ENCODE measurements at regions of chr12 and their contacts with region 1.

Region 1: GRCh38 chr12:111451649-111452129 is 46.0 kb downstream of the SH2B3 start:
- DNase-seq: peak in 2 of 9 experiments; percentile 72 to 79
- ATAC-seq: peak; percentile 71
- H3K4me3 ChIP-seq: no peak overlapping the region
- H3K4me3 Mint-ChIP-seq: no peak overlapping the region
- H3K27ac ChIP-seq: no peak overlapping the region
- H3K27ac Mint-ChIP-seq: peak overlapping the region; percentile 5
- H3K4me1 ChIP-seq: no peaks in the 10 kb centered on the region
- H3K4me1 Mint-ChIP-seq: peaks cover 20% of the 10 kb centered on the region
- H3K27me3 ChIP-seq: no peaks in the 10 kb centered on the region
- H3K27me3 Mint-ChIP-seq: no peaks in the 10 kb centered on the region
- CTCF ChIP-seq: peak; percentile 84

Region 2: GRCh38 chr12:111330800-111331752 is 120.6 kb before region 1 on chr12:
- CTCF ChIA-PET with region 1: interaction called, 4 read pairs
- POLR2A ChIA-PET with region 1: no interaction called
- intact Hi-C with region 1: loop called in 1 of 2 experiments (anchors 5 kb)
- DNase-seq: peak in 2 of 9 experiments; percentile 25 to 37
- ATAC-seq: no peak
- H3K4me3 ChIP-seq: no peak overlapping the region
- H3K4me3 Mint-ChIP-seq: no peak overlapping the region
- H3K27ac ChIP-seq: no peak overlapping the region
- H3K27ac Mint-ChIP-seq: no peak overlapping the region
- H3K4me1 ChIP-seq: no peaks in the 10 kb centered on the region
- H3K4me1 Mint-ChIP-seq: no peaks in the 10 kb centered on the region
- H3K27me3 ChIP-seq: peaks cover 0 to 3% of the 10 kb centered on the region in 2 experiments
- H3K27me3 Mint-ChIP-seq: no peaks in the 10 kb centered on the region
- CTCF ChIP-seq: peak; percentile 45

Region 3: DNA sequence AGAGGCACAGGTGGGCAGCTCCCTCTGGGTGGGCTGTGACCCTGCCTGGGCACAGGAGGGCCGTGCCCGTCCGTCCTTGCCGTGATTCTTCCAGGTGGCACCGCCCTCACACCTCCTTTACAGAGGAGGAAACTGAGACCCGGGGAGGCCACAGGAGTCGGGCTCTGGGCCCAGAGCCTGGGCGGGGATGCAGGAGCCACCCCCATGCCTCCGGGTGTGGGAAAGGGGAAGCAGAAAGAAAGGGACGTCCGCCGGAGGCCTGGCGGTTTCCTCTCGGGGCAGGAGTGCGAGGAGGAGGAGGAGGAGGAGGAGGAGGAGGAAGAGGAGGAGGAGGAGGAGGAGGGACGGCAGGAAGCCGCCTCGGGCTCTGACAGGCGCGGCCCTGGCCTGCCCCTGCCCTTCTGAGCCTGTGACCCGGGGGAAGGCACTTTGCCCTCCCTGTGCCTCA is 22.9 kb before region 1 on chr12:
- CTCF ChIA-PET with region 1: interaction called, 47 read pairs
- POLR2A ChIA-PET with region 1: interaction called, 26 read pairs
- intact Hi-C with region 1: loop called (anchors 1 kb)
- DNase-seq: peak in 2 of 9 experiments; percentile 39 to 58
- ATAC-seq: no peak
- H3K4me3 ChIP-seq: peak overlapping the region in 1 of 2 experiments; percentile 24
- H3K4me3 Mint-ChIP-seq: peak overlapping the region; percentile 49
- H3K27ac ChIP-seq: peak overlapping the region in 1 of 2 experiments; percentile 98
- H3K27ac Mint-ChIP-seq: peak overlapping the region; percentile 83
- H3K4me1 ChIP-seq: peaks cover 98% of the 10 kb centered on the region
- H3K4me1 Mint-ChIP-seq: peaks cover 82% of the 10 kb centered on the region
- H3K27me3 ChIP-seq: no peaks in the 10 kb centered on the region
- H3K27me3 Mint-ChIP-seq: no peaks in the 10 kb centered on the region
- CTCF ChIP-seq: no peak

Region 4: DNA sequence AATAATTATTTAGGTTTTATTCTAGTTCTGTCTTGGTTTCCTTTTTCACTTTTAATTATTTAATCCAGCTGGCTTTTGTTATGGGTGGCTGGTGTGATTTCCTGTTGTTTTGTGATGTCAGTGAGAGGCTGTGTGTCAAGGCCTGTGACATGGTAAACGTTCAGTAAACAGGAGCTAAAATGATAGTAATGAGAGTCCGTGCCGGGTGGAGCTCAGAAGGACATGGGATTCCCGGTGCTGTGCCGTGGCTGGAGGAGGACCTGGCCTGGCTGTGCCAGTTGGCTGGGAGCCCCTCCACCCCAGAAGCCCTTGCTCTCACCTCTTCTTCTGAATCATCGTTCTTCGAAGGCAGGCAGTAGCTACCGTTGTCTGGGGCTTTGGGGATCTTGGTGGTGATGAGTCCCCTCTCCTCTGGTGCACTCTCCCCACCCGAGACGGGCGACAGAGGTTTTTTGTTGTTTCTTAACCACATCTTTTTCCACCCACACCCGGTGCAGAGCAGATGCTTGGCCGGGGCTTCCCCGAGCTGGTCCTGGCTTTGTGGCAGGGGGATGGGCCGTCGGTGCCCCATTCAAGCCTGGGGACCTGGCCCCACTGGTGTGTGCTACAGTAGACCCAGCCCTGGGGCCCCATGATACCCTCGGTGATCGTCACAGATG is 16.9 kb before region 1 on chr12:
- CTCF ChIA-PET with region 1: interaction called, 77 read pairs
- POLR2A ChIA-PET with region 1: interaction called, 26 read pairs
- intact Hi-C with region 1: loop called in 1 of 2 experiments (anchors 1 kb)
- DNase-seq: peak; percentile 70 to 96 (median 87)
- ATAC-seq: peak; percentile 70
- H3K4me3 ChIP-seq: peak overlapping the region; percentile 34 to 39
- H3K4me3 Mint-ChIP-seq: peak overlapping the region; percentile 82
- H3K27ac ChIP-seq: peak overlapping the region; percentile 91 to 98
- H3K27ac Mint-ChIP-seq: peak overlapping the region; percentile 100
- H3K4me1 ChIP-seq: peaks cover 99% of the 10 kb centered on the region
- H3K4me1 Mint-ChIP-seq: peaks cover 93% of the 10 kb centered on the region
- H3K27me3 ChIP-seq: no peaks in the 10 kb centered on the region
- H3K27me3 Mint-ChIP-seq: no peaks in the 10 kb centered on the region
- CTCF ChIP-seq: no peak

Region 5: DNA sequence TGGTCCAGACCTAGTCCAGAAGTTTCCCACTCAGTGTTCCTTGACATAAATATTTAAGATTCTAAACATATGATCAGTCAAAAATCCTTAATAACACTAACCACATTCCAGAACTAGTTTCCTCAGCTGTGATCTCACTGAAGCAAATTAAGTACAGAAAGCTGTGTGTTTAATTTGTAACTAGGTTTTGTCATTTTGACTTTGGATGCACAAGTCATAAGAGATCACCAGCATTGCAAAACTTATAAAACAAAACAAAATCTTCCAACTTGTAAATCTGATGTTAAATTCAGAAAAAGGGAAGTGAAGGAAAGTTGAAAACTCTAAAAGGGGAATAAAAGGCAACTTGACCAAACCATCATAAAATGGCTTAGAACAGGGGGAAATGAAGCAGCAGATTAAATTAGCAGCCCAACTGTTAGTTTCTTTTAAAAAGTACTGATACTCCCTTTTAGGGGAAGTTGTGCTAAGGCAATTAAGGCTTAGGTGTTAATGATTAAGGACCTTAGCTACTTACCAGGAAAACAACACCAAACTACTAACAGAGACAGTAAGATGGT is 10.6 kb after region 1 on chr12:
- CTCF ChIA-PET with region 1: interaction called, 29 read pairs
- POLR2A ChIA-PET with region 1: no interaction called
- intact Hi-C with region 1: no loop called
- DNase-seq: no peak
- ATAC-seq: no peak
- H3K4me3 ChIP-seq: no peak overlapping the region
- H3K4me3 Mint-ChIP-seq: no peak overlapping the region
- H3K27ac ChIP-seq: no peak overlapping the region
- H3K27ac Mint-ChIP-seq: no peak overlapping the region
- H3K4me1 ChIP-seq: no peaks in the 10 kb centered on the region
- H3K4me1 Mint-ChIP-seq: no peaks in the 10 kb centered on the region
- H3K27me3 ChIP-seq: no peaks in the 10 kb centered on the region
- H3K27me3 Mint-ChIP-seq: no peaks in the 10 kb centered on the region
- CTCF ChIP-seq: no peak

Region 6: DNA sequence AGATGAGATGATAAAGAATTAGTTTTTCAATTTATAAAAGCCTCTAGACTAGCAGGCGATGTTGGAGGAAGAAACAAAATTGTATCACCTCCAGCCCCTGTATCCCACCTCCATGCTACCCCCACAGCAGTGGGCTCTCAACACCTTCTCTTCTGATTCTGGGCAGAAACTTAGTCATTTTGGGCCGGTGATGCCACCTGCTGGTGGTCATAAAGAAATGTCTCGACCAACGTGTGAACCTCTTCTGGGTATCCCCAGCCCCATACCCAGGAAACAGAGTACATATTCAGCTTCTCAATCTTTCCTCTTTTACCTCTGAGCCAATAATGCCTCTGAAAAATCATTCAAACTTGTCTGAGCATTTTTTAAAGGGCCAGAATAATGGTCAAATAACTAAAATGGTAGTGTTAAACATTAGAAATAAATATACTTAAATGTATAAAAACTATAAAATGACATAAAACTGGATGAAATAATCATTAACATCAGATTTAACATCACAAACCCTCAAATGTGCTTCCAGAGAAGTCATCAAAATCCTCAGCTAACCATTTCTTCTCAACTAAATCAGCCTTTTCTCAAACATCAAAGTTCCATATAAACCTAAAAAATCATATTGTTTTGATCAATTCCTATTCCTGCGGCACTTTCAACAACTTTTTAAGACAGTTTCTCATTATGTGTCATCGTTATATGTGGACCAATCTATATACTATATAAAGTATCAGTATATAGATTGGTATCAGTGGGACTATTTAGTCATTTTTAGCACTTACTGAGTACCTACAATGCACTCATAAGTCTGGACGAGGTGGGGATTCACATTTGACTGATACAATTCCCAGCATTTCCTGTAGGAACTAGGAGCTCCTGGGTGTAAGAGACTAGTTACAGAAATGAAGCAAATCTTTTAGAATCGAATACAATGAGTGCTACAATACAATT is 78.0 kb after region 1 on chr12:
- CTCF ChIA-PET with region 1: interaction called, 16 read pairs
- POLR2A ChIA-PET with region 1: no interaction called
- intact Hi-C with region 1: loop called (anchors 1 to 2 kb)
- DNase-seq: peak; percentile 8 to 82 (median 56)
- ATAC-seq: peak; percentile 80
- H3K4me3 ChIP-seq: no peak overlapping the region
- H3K4me3 Mint-ChIP-seq: no peak overlapping the region
- H3K27ac ChIP-seq: no peak overlapping the region
- H3K27ac Mint-ChIP-seq: no peak overlapping the region
- H3K4me1 ChIP-seq: no peaks in the 10 kb centered on the region
- H3K4me1 Mint-ChIP-seq: peaks cover 3% of the 10 kb centered on the region
- H3K27me3 ChIP-seq: no peaks in the 10 kb centered on the region
- H3K27me3 Mint-ChIP-seq: no peaks in the 10 kb centered on the region
- CTCF ChIP-seq: peak; percentile 87